Endothelial cell of umbilical vein (primary cell): ENCODE measurements at regions of chr2 and their contacts with region 1.

Region 1: GRCh38 chr2:9630749-9631483 is at the start of gene YWHAQ:
- DNase-seq: peak; percentile 99
- H3K4me3 ChIP-seq: peak within 1 kb of the TSS; percentile 64 to 97 (median 89)
- H3K27ac ChIP-seq: peak within 1 kb of the TSS; percentile 51
- H3K4me1 ChIP-seq: peaks cover 22% of the 10 kb centered on the region
- H3K27me3 ChIP-seq: no peaks in the 10 kb centered on the region
- CTCF ChIP-seq: no peak
- POLR2A ChIP-seq: peak; percentile 95
- total RNA-seq, gene YWHAQ: 347 and 456 TPM in 2 replicates

Region 2: DNA sequence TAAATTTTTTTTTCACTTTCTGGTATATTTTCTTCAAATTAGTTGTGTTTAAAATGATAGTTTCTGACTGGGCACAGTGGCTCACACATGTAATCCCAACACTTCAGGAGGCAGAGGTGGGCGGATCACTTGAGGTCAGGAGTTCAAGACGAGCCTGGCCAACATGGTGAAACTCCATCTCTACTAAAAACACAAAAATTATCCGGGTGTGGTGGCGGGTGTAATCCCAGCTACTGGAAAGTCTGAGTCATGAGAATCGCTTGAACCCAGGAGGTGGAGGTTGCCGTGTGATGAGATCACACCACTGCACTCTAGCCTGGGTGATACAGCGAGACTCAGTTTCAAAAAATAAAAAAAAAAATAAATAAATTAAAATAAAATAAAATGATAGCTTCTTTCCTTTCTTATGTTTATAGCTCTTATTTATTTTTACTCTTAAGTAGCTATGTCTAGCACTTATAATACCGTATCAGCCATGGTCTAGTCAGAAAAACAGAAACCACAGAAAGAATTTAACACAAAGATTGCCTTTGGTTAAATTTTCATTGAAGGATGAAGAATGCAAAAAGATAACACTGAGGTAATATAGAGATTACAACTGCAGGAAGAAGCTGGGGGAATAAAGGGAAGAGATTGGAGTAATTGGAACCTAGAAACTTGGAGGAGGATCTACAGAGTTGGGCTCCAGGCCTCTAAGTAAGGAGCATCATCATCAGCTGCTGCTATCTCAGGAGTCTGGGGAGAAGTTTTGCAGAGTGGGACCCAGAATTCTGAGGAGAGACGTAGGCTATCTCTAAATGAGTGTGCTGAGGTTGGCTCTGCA is 572.8 kb before region 1 on chr2:
- CTCF ChIA-PET with region 1: no interaction called
- POLR2A ChIA-PET with region 1: no interaction called
- dilution Hi-C with region 1: no loop called
- intact Hi-C with region 1: no loop called
- DNase-seq: no peak
- H3K4me3 ChIP-seq: no peak overlapping the region
- H3K27ac ChIP-seq: no peak overlapping the region
- H3K4me1 ChIP-seq: no peaks in the 10 kb centered on the region
- H3K27me3 ChIP-seq: peaks cover 0 to 1% of the 10 kb centered on the region in 2 experiments
- CTCF ChIP-seq: no peak
- POLR2A ChIP-seq: no peak

Region 3: GRCh38 chr2:9318461-9319337 is 312.2 kb before region 1 on chr2:
- CTCF ChIA-PET with region 1: no interaction called
- POLR2A ChIA-PET with region 1: no interaction called
- dilution Hi-C with region 1: no loop called
- intact Hi-C with region 1: no loop called
- DNase-seq: peak; percentile 74
- H3K4me3 ChIP-seq: no peak overlapping the region
- H3K27ac ChIP-seq: no peak overlapping the region
- H3K4me1 ChIP-seq: peaks cover 5% of the 10 kb centered on the region
- H3K27me3 ChIP-seq: no peaks in the 10 kb centered on the region
- CTCF ChIP-seq: no peak
- POLR2A ChIP-seq: no peak

Region 4: DNA sequence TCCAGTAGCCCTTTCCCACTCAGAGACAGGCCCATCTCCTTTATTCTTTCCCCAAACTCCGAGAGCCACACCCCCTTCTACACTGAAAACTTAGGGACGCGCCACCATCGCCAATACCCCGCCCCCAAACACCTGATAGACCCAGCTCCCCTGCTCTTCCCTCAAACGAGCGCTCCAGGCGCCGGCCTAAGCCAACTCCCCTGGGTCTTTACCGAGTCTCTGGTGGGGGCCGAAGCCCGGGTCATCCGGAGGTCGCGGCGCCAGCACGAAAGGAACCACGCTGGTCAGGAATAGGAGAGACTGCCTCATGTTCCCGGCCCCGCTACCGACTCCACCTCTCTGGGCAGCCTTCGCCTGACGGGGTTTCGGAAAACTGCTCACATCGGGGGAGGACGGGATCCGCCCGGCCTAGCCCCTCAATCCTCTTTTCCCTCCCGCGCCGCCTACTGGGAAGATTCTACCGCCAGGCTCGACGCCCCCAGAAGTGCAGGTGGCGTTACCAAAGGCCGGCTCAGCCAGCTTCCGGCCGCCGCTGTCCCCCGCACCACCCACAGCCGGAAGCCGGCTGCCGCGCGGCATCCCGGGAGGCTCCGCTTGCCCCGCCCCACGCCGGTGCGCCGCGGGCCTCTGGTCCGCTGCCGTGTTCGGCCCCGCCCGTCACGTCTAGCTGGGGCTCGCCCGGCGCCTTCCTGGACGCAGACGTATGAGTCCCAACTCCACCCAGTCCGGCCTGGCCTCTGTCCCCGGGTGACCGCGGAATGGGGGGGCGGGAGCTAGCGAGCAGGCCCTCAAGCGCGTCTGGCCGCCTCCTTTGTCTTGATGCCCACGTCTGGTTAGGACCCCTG is 75.4 kb before region 1 on chr2 and contains the start of gene ADAM17:
- CTCF ChIA-PET with region 1: interaction called, 3 read pairs
- POLR2A ChIA-PET with region 1: interaction called, 11 read pairs
- dilution Hi-C with region 1: no loop called
- intact Hi-C with region 1: loop called (anchors 1 kb)
- DNase-seq: peak; percentile 97
- H3K4me3 ChIP-seq: peak within 1 kb of the TSS; percentile 43 to 89 (median 81)
- H3K27ac ChIP-seq: peak within 1 kb of the TSS; percentile 84
- H3K4me1 ChIP-seq: peaks cover 28% of the 10 kb centered on the region
- H3K27me3 ChIP-seq: no peaks in the 10 kb centered on the region
- CTCF ChIP-seq: peak; percentile 39
- POLR2A ChIP-seq: peak; percentile 89
- total RNA-seq, gene ADAM17: 52.9 and 57.1 TPM in 2 replicates

Region 5: DNA sequence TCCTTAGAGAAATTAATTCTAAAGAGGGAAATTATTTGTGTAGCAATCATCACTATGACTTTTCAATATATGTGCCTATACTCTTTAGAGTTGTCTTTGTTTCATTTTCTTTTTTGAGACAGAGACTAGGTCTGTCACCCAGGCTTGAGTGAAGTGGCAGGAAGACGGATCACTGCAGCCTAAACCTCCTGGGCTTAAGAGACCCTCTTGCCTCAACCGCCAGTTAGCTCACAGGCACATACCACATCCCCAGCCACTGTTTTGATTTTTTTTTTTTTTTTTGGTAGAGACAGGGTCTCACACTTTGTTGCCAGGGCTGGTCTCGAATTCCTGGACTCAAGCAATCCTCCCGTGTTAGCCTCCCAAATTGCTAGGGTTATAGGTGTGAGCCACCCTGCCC is 12.5 kb before region 1 on chr2:
- CTCF ChIA-PET with region 1: interaction called, 8 read pairs
- POLR2A ChIA-PET with region 1: interaction called, 10 read pairs
- dilution Hi-C with region 1: no loop called
- intact Hi-C with region 1: no loop called
- DNase-seq: no peak
- H3K4me3 ChIP-seq: no peak overlapping the region
- H3K27ac ChIP-seq: no peak overlapping the region
- H3K4me1 ChIP-seq: no peaks in the 10 kb centered on the region
- H3K27me3 ChIP-seq: no peaks in the 10 kb centered on the region
- CTCF ChIP-seq: no peak
- POLR2A ChIP-seq: no peak

Region 6: DNA sequence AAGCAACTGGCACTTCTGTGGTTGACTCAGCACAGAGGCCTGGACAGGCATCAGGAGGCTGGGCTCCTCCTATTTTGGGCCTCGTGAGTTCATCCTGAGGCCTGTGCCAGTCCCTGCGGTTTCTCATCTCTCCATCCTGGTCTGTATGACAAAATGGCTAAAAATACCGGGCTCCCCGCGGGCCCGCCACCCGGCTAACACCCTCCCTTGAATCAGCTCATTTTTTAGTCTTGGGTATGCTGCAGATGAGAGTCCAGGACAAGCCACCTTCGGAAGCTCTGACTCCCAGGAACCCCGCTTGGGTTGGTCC is 62.2 kb after region 1 on chr2:
- CTCF ChIA-PET with region 1: interaction called, 7 read pairs
- POLR2A ChIA-PET with region 1: no interaction called
- dilution Hi-C with region 1: no loop called
- intact Hi-C with region 1: loop called (anchors 1 kb)
- DNase-seq: no peak
- H3K4me3 ChIP-seq: no peak overlapping the region
- H3K27ac ChIP-seq: no peak overlapping the region
- H3K4me1 ChIP-seq: no peaks in the 10 kb centered on the region
- H3K27me3 ChIP-seq: no peaks in the 10 kb centered on the region
- CTCF ChIP-seq: no peak
- POLR2A ChIP-seq: no peak

Region 7: DNA sequence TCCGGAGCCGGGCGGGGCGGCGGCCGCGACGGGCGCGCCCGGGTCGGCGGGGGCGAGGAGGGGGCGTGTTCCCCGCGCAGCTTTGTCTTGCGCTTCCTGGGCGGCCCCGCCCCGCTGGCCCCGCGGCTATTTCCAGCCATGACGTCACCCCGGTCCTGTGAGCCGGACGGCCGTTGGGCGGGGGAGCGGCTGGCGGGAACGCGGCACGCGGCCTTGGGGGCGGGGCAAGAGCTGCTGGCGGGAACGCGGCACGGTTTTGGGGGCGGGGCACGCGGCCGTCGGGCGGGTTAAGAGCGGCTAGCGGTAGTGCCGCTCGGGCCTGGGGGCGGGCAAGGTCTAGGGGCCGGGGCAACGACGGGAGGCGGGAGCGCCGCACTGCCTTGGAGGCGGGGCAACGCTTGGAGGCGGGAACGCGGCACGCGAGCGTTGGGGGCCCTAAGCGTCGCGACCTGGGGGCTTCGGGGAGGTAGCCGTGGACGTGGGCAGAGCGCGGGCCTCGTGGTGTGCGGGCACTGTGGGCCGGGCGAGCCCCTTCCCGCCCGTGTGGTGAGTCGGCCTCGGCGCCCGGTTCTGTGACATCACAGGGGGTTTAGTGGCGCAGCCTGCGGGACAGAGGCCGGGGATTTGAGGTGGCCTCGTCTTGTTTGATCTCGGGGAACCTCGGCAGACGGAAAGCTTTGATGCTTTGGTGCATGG is 413.1 kb after region 1 on chr2:
- CTCF ChIA-PET with region 1: no interaction called
- POLR2A ChIA-PET with region 1: no interaction called
- dilution Hi-C with region 1: no loop called
- intact Hi-C with region 1: loop called (anchors 10 kb)
- DNase-seq: peak; percentile 92
- H3K4me3 ChIP-seq: peak overlapping the region in 2 of 3 experiments; percentile 31 to 75
- H3K27ac ChIP-seq: peak overlapping the region; percentile 70
- H3K4me1 ChIP-seq: peaks cover 4% of the 10 kb centered on the region
- H3K27me3 ChIP-seq: no peaks in the 10 kb centered on the region
- CTCF ChIP-seq: no peak
- POLR2A ChIP-seq: no peak